ENCODE measurements at regions of chr19 and their contacts with region 1.

Region 1: GRCh38 chr19:18328340-18329034 is 5.6 kb upstream of the LSM4 start:
- DNase-seq: peak; percentile 87
- H3K4me3 ChIP-seq: peak overlapping the region; percentile 46
- CTCF ChIP-seq: peak; percentile 78

Region 2: GRCh38 chr19:18203863-18204393 is 124.6 kb before region 1 on chr19 and contains the start of gene RAB3A:
- CTCF ChIA-PET with region 1: interaction called, 10 read pairs
- POLR2A ChIA-PET with region 1: interaction called, 3 read pairs
- DNase-seq: peak; percentile 99
- H3K4me3 ChIP-seq: peak within 1 kb of the TSS; percentile 96
- CTCF ChIP-seq: no peak

Region 3: GRCh38 chr19:18304458-18305310 is 23.8 kb before region 1 on chr19:
- CTCF ChIA-PET with region 1: interaction called, 11 read pairs
- POLR2A ChIA-PET with region 1: interaction called, 4 read pairs
- DNase-seq: no peak
- H3K4me3 ChIP-seq: peak overlapping the region; percentile 45
- CTCF ChIP-seq: no peak

Region 4: GRCh38 chr19:18349524-18350128 is 21.1 kb after region 1 on chr19:
- CTCF ChIA-PET with region 1: interaction called, 19 read pairs
- POLR2A ChIA-PET with region 1: no interaction called
- DNase-seq: no peak
- H3K4me3 ChIP-seq: no peak overlapping the region
- CTCF ChIP-seq: peak; percentile 84

Region 5: DNA sequence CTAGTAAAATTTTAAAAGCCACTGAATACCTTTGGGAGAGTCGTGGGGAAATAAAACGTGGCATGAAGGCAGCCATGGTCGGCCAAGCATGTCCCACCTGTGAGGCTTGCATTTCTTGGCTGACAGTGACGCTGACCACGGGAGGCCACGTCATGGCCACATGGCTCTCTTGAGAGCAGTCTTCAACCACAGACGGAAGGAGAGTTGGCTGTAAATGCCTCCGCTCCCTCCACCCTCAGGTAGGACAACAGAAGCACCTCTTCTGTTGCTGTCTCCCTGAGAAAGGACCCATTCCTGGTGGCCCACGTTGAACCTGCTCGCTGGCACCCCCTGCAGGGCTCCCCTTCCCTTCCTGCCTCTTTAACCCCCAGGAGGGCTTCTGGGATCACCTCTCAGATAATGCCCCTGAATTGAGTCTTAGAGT is 79.6 kb after region 1 on chr19:
- CTCF ChIA-PET with region 1: interaction called, 45 read pairs
- POLR2A ChIA-PET with region 1: no interaction called
- DNase-seq: no peak
- H3K4me3 ChIP-seq: no peak overlapping the region
- CTCF ChIP-seq: peak; percentile 52

Region 6: GRCh38 chr19:18542936-18543815 is 214.7 kb after region 1 on chr19 and contains the start of gene FKBP8:
- CTCF ChIA-PET with region 1: no interaction called
- POLR2A ChIA-PET with region 1: no interaction called
- DNase-seq: no peak
- H3K4me3 ChIP-seq: peak within 1 kb of the TSS; percentile 74
- CTCF ChIP-seq: no peak

Measured in AG04449 (cell line).